Endothelial cell of umbilical vein (primary cell): ENCODE measurements at regions of chr4 and their contacts with region 1.

Region 1: DNA sequence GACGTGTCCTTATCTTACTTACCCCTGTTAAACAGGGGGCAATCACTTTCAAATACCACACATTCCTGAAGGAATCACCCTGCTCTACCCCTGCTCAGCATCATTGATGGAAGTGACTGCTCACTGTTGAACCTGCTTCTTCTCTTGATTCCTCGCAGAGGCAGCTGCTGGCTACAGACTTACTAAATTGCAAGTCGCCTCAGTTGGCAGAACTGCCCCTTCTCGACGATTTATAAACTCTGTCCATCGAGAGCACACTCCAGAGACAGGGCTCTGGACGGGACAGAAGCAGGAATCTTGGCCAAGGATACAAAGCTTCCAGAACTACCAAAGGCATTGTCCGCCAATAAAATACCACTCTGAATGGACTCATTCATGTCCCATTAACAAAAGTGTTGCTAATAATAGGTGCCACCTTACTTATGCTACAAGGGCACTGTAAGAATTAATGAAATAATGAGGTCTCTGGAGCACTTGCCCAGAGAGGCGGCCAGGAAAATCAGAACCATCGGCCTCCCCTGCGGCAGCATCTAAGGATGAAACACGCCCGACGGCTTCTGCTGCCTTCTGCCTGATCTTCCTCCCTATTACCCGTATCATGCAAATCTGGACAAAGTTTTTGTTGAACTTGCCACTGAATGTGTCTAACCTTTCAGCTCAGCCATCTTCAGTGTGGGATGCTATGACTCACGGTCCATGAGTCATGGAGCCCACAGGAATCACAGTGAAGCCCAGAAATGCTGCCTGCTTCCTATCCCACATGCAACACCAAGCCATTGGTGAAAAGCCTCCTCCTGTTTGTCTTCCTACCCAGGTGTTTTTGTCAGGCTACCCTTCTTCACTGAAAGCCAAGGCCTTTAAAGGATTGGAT is 164.9 kb downstream of the MAML3 start:
- DNase-seq: peak; percentile 97
- H3K4me3 ChIP-seq: no peak overlapping the region
- H3K27ac ChIP-seq: peak overlapping the region; percentile 25
- H3K4me1 ChIP-seq: peaks cover 17% of the 10 kb centered on the region
- H3K27me3 ChIP-seq: no peaks in the 10 kb centered on the region
- CTCF ChIP-seq: no peak
- POLR2A ChIP-seq: no peak

Region 2: GRCh38 chr4:139913398-139913990 is 75.6 kb before region 1 on chr4:
- CTCF ChIA-PET with region 1: no interaction called
- POLR2A ChIA-PET with region 1: no interaction called
- dilution Hi-C with region 1: no loop called
- intact Hi-C with region 1: loop called (anchors 5 kb)
- DNase-seq: peak; percentile 84
- H3K4me3 ChIP-seq: no peak overlapping the region
- H3K27ac ChIP-seq: peak overlapping the region; percentile 31
- H3K4me1 ChIP-seq: peaks cover 26% of the 10 kb centered on the region
- H3K27me3 ChIP-seq: no peaks in the 10 kb centered on the region
- CTCF ChIP-seq: no peak
- POLR2A ChIP-seq: no peak

Region 3: GRCh38 chr4:139924782-139925181 is 64.3 kb before region 1 on chr4:
- CTCF ChIA-PET with region 1: no interaction called
- POLR2A ChIA-PET with region 1: no interaction called
- dilution Hi-C with region 1: no loop called
- intact Hi-C with region 1: no loop called
- DNase-seq: no peak
- H3K4me3 ChIP-seq: no peak overlapping the region
- H3K27ac ChIP-seq: no peak overlapping the region
- H3K4me1 ChIP-seq: peaks cover 36% of the 10 kb centered on the region
- H3K27me3 ChIP-seq: no peaks in the 10 kb centered on the region
- CTCF ChIP-seq: no peak
- POLR2A ChIP-seq: no peak